Activated CD8-positive, alpha-beta T cell treated with anti-CD3 and anti-CD28 coated beads, Interleukin-2, amount 10 ng/mL, durations not matched to agents 7 days and 5 days (primary cell): ENCODE measurements at regions of chr10 and their contacts with region 1.

Region 1: GRCh38 chr10:117496616-117497028 is 45.9 kb upstream of the EMX2 start:
- DNase-seq: peak; percentile 72
- ATAC-seq: peak; percentile 64
- H3K4me3 Mint-ChIP-seq: no peak overlapping the region
- H3K27ac Mint-ChIP-seq: no peak overlapping the region
- H3K4me1 Mint-ChIP-seq: no peaks in the 10 kb centered on the region
- H3K27me3 Mint-ChIP-seq: peaks cover 20% of the 10 kb centered on the region

Region 2: GRCh38 chr10:117511601-117512390 is 15.2 kb after region 1 on chr10:
- CTCF ChIA-PET with region 1: no interaction called
- POLR2A ChIA-PET with region 1: no interaction called
- DNase-seq: no peak
- ATAC-seq: no peak
- H3K4me3 Mint-ChIP-seq: no peak overlapping the region
- H3K27ac Mint-ChIP-seq: no peak overlapping the region
- H3K4me1 Mint-ChIP-seq: no peaks in the 10 kb centered on the region
- H3K27me3 Mint-ChIP-seq: peaks cover 2% of the 10 kb centered on the region

Region 3: GRCh38 chr10:118241229-118242137 is 744.9 kb after region 1 on chr10:
- CTCF ChIA-PET with region 1: interaction called, 49 read pairs
- POLR2A ChIA-PET with region 1: no interaction called
- DNase-seq: peak; percentile 74
- ATAC-seq: no peak
- H3K4me3 Mint-ChIP-seq: no peak overlapping the region
- H3K27ac Mint-ChIP-seq: no peak overlapping the region
- H3K4me1 Mint-ChIP-seq: no peaks in the 10 kb centered on the region
- H3K27me3 Mint-ChIP-seq: peaks cover 36% of the 10 kb centered on the region